Common myeloid progenitor, CD34-positive (primary cell): ENCODE measurements at regions of chr10 and their contacts with region 1.

Region 1: GRCh38 chr10:18214691-18215563 is 74.7 kb downstream of the CACNB2 start:
- DNase-seq: peak; percentile 60 to 84 (median 80)
- H3K4me3 ChIP-seq: no peak overlapping the region
- H3K27ac ChIP-seq: no peak overlapping the region
- H3K4me1 ChIP-seq: peaks cover 0 to 22% (median under 1%) of the 10 kb centered on the region in 4 experiments
- H3K27me3 ChIP-seq: no peaks in the 10 kb centered on the region

Region 2: DNA sequence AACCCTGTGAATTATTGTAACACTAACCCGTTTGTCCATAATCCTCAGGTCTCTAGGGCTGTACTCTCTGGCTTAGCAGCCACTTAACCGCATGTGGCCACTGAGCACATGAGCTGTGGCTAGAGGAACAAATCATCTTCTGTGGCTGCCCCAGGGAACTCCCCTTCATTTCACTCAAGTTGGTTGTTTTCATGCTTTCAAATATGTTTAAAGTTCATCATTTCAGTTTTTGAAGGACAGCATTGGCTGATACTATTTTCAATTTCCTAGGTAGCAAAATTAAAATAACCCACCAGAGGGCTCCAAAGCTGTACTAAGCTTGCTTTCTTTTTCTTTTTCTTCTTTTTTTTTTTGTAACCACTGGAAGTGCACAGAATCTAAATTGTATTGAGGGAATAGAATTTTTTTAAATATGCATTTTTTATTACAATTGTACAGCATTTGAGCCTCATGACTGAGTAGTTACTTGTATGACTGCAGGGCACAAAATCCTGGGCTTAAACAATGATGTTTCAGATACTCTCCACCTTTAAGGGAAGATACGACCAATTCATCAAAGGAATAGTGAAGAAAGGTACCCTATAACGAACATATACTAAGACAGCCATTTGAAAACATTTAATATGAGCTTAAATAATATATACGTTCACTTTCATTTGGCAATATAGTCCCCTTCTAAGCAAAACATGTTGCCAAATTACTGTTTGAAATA is 367.2 kb before region 1 on chr10:
- CTCF ChIA-PET with region 1: interaction called, 23 read pairs
- POLR2A ChIA-PET with region 1: no interaction called
- DNase-seq: peak; percentile 25 to 62 (median 38)
- H3K4me3 ChIP-seq: no peak overlapping the region
- H3K27ac ChIP-seq: no peak overlapping the region
- H3K4me1 ChIP-seq: peaks cover 8 to 18% (median 14%) of the 10 kb centered on the region in 4 experiments
- H3K27me3 ChIP-seq: no peaks in the 10 kb centered on the region

Region 3: GRCh38 chr10:18204039-18204835 is 10.7 kb before region 1 on chr10:
- CTCF ChIA-PET with region 1: interaction called, 11 read pairs
- POLR2A ChIA-PET with region 1: no interaction called
- DNase-seq: peak; percentile 94 to 99 (median 98)
- H3K4me3 ChIP-seq: peak overlapping the region in 1 of 7 experiments; percentile 63
- H3K27ac ChIP-seq: peak overlapping the region; percentile 96 to 97
- H3K4me1 ChIP-seq: peaks cover 14 to 48% (median 16%) of the 10 kb centered on the region in 4 experiments
- H3K27me3 ChIP-seq: no peaks in the 10 kb centered on the region